Heart left ventricle (tissue), 16 donors: ENCODE measurements at regions of chr14 and their contacts with region 1.

Region 1: GRCh38 chr14:60349663-60350365 is 100.8 kb downstream of the PPM1A start:
- DNase-seq: peak in 2 of 5 donors; percentile 9 to 20
- ATAC-seq: peak in 3 of 4 donors; percentile 60 to 69 (median 66)
- H3K4me3 ChIP-seq: peak overlapping the region in 6 of 12 donors; percentile 9 to 25 (median 19)
- H3K27ac ChIP-seq: no peak overlapping the region
- H3K4me1 ChIP-seq: peaks cover 0 to 6% (median 0%) of the 10 kb centered on the region in 12 donors
- H3K27me3 ChIP-seq: no peaks in the 10 kb centered on the region
- CTCF ChIP-seq: peak; percentile 42 to 75 (median 66)
- POLR2A ChIP-seq: no peak

Region 2: GRCh38 chr14:60553808-60554207 is 204.0 kb after region 1 on chr14:
- intact Hi-C with region 1: loop called in 2 of 10 experiments (anchors 5 to 10 kb)
- DNase-seq: no peak
- ATAC-seq: no peak
- H3K4me3 ChIP-seq: no peak overlapping the region
- H3K27ac ChIP-seq: no peak overlapping the region
- H3K4me1 ChIP-seq: no peaks in the 10 kb centered on the region
- H3K27me3 ChIP-seq: peaks cover 0 to 11% (median 0%) of the 10 kb centered on the region in 9 donors
- CTCF ChIP-seq: no peak
- POLR2A ChIP-seq: no peak

Region 3: DNA sequence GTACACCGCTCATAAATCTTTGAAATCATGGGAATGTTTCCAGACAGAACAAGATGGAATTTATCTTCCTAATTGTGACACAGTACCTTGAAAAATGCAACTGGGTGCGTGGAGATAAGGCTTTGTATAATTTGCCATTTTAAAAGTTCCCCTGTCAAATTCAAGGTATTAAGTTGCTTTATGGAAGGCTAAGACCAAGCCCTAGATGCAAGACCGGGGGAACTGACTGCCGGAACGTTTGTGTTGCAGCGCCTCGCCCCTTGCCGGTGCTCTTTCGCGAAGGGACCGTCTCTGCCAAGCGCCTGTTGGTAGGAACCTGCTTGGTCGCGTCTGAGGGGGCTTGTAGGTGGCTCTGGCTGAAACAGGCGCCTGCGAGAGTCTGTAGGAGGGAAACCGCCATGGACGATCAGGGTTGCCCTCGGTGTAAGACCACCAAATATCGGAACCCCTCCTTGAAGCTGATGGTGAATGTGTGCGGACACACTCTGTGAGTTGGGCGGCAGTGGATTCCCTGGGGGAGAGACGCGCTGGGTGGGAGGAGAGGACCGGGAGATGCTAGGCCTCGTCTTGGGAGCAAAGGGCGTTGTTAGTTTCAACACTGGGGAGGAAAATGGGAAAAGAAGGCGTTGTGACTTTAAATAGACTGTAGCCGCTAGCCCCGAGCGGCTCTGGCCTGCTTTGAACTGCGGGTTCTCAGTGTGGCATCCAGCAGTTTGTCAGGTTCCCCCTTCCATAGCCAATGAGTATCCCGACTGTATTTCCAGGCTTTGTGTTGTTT is 384.8 kb after region 1 on chr14 and contains the start of gene MNAT1:
- intact Hi-C with region 1: loop called in 1 of 10 experiments (anchors 10 kb)
- DNase-seq: peak; percentile 71 to 87 (median 74)
- ATAC-seq: peak; percentile 91 to 97 (median 96)
- H3K4me3 ChIP-seq: peak within 1 kb of the TSS; percentile 49 to 92 (median 78)
- H3K27ac ChIP-seq: peak within 1 kb of the TSS in 11 of 12 donors; percentile 50 to 83 (median 68)
- H3K4me1 ChIP-seq: peaks cover 0 to 34% (median 19%) of the 10 kb centered on the region in 12 donors
- H3K27me3 ChIP-seq: peaks cover 0 to 12% (median 0%) of the 10 kb centered on the region in 9 donors
- CTCF ChIP-seq: peak in 2 of 12 donors; percentile 8 to 22
- POLR2A ChIP-seq: peak in 1 of 2 donors; percentile 49
- total RNA-seq, gene MNAT1: 21.4 to 32.6 (median 27.0) TPM

Region 4: DNA sequence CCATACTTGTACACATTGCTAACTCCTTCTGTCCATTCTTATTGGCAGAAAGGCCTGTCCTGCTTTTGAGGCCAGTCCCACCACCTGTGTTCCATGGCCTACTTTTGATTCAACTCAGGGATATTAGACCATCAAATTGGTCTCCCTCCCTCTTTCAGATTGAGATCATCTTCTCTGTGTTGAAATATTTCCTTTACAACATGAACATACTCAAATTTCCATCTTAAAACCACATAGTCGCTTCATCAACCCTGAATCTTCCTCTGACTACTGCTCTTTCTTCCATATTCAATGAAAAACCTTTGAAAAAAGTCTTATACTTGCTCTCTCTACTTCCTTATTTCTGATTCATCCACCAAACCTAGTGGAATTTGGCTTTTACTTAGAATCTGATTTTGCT is 596.2 kb after region 1 on chr14:
- intact Hi-C with region 1: no loop called
- DNase-seq: no peak
- ATAC-seq: no peak
- H3K4me3 ChIP-seq: no peak overlapping the region
- H3K27ac ChIP-seq: no peak overlapping the region
- H3K4me1 ChIP-seq: peaks cover 0 to 42% (median 11%) of the 10 kb centered on the region in 12 donors
- H3K27me3 ChIP-seq: no peaks in the 10 kb centered on the region
- CTCF ChIP-seq: no peak
- POLR2A ChIP-seq: no peak

Region 5: DNA sequence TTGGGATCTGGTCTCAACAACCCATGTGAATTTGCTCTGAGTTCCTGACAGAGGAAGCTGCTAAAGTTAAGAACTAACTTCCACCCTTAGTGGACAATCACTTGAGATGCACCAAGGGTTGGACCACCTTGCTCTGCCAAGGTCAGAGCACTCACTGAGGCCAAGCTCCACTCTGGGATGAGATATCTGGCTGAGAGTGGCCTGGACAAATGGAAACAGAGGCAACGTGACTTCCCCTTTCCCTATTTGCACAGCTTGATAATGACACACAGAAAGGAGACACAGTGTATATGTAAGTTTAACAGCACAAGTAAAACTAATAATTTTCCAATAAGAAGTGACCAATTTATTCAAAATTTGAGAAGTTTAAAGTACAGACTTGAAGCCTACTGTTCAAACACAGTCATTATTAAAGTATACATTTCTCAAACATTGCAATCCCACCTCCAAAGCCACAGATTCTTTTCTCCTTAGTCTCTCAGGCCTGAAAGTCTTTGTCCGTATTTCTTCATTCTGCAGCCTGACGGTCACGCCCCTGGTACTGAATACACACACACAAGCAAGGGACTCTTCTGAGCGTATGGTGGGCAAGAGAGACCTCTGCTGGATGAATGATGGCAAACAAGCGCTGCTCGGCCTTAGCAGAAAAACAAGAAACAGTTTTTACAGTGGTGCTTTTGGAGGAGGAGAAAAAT is 902.7 kb after region 1 on chr14:
- intact Hi-C with region 1: loop called in 8 of 10 experiments (anchors 5 to 10 kb)
- DNase-seq: peak in 4 of 5 donors; percentile 60 to 73 (median 67)
- ATAC-seq: peak; percentile 89 to 97 (median 96)
- H3K4me3 ChIP-seq: no peak overlapping the region
- H3K27ac ChIP-seq: no peak overlapping the region
- H3K4me1 ChIP-seq: peaks cover 0 to 5% (median 0%) of the 10 kb centered on the region in 12 donors
- H3K27me3 ChIP-seq: peaks cover 0 to 4% (median 0%) of the 10 kb centered on the region in 9 donors
- CTCF ChIP-seq: peak; percentile 64 to 89 (median 82)
- POLR2A ChIP-seq: no peak